Mammary epithelial cell (primary cell): ENCODE measurements at regions of chr4 and their contacts with region 1.

Region 1: DNA sequence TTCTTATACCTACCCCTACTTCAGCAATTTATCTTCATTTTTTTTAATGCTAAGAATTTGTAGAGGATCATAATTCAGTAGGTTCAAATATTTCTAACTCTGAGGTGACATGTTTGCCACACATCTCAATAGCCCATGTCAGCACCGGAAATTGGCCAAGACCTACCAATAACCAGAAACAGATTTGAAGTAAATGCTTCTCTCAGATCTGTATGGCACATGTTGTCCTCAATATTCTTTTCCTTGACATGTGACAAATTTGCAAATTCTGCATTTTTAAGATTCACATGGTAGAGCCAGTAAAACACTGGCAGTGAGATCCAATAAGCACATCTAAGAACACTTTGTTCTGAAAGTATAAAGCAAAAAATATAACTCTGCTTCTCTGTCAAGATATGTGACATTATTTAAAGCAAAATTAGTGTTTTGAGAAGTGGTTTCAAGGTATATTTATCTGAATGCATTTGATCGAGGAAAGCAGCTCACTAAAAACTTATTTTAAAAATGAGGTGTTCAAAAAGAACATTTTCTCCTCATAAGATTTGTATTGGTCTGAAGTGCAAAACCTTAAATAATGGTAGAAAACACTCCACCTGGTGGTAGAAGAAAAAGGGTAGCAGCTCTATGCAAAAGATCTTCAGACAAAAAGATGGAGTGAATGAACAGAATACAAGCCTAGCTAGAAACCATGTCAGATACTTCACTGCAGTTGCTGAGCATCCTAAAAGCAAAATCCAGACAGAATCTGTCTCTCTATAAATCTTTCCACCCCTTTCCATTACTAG is 513.8 kb upstream of the FAM241A start:
- DNase-seq: no peak
- H3K4me3 ChIP-seq: no peak overlapping the region
- H3K27ac ChIP-seq: no peak overlapping the region
- H3K4me1 ChIP-seq: peaks cover 4% of the 10 kb centered on the region
- H3K27me3 ChIP-seq: no peaks in the 10 kb centered on the region
- CTCF ChIP-seq: peak; percentile 58 to 62

Region 2: GRCh38 chr4:109998867-109999584 is 1632.4 kb before region 1 on chr4:
- CTCF ChIA-PET with region 1: no interaction called
- dilution Hi-C with region 1: no loop called
- in situ Hi-C with region 1: no loop called
- intact Hi-C with region 1: loop called (anchors 2 kb)
- DNase-seq: peak; percentile 44
- H3K4me3 ChIP-seq: no peak overlapping the region
- H3K27ac ChIP-seq: no peak overlapping the region
- H3K4me1 ChIP-seq: no peaks in the 10 kb centered on the region
- H3K27me3 ChIP-seq: no peaks in the 10 kb centered on the region
- CTCF ChIP-seq: peak; percentile 53 to 69

Region 3: DNA sequence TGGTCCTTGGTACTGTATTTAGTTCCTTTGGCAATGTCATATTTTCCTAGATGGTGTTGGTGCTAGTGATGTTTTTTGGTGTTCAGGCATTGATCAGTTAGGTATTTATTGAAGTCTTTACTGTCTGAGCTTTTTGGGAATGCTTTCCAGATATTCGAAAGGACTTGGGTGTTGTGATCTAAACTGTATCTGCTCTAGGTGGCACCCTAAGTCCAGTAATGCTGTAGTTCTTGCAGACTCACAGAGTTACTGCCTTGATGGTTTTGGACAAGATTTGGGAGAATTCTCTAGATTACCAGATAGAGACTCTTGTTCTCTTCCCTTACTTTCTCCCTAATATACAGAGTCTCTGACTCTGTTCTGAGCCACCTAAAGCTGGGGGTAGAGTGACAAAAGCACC is 495.0 kb before region 1 on chr4:
- CTCF ChIA-PET with region 1: no interaction called
- dilution Hi-C with region 1: no loop called
- in situ Hi-C with region 1: loop called (anchors 25 kb)
- intact Hi-C with region 1: loop called (anchors 1 kb)
- DNase-seq: no peak
- H3K4me3 ChIP-seq: no peak overlapping the region
- H3K27ac ChIP-seq: no peak overlapping the region
- H3K4me1 ChIP-seq: no peaks in the 10 kb centered on the region
- H3K27me3 ChIP-seq: no peaks in the 10 kb centered on the region
- CTCF ChIP-seq: peak in 1 of 2 donors; percentile 38

Region 4: GRCh38 chr4:111475001-111475400 is 156.4 kb before region 1 on chr4:
- CTCF ChIA-PET with region 1: no interaction called
- dilution Hi-C with region 1: no loop called
- in situ Hi-C with region 1: no loop called
- intact Hi-C with region 1: loop called (anchors 1 kb)
- DNase-seq: peak; percentile 6
- H3K4me3 ChIP-seq: no peak overlapping the region
- H3K27ac ChIP-seq: no peak overlapping the region
- H3K4me1 ChIP-seq: no peaks in the 10 kb centered on the region
- H3K27me3 ChIP-seq: no peaks in the 10 kb centered on the region
- CTCF ChIP-seq: peak; percentile 53 to 63

Region 5: GRCh38 chr4:111602848-111603247 is 28.6 kb before region 1 on chr4:
- CTCF ChIA-PET with region 1: no interaction called
- dilution Hi-C with region 1: no loop called
- in situ Hi-C with region 1: no loop called
- intact Hi-C with region 1: no loop called
- DNase-seq: no peak
- H3K4me3 ChIP-seq: no peak overlapping the region
- H3K27ac ChIP-seq: no peak overlapping the region
- H3K4me1 ChIP-seq: no peaks in the 10 kb centered on the region
- H3K27me3 ChIP-seq: no peaks in the 10 kb centered on the region
- CTCF ChIP-seq: peak; percentile 28 to 46